OCI-LY7 (cell line): ENCODE measurements at regions of chr16 and their contacts with region 1.

Region 1: DNA sequence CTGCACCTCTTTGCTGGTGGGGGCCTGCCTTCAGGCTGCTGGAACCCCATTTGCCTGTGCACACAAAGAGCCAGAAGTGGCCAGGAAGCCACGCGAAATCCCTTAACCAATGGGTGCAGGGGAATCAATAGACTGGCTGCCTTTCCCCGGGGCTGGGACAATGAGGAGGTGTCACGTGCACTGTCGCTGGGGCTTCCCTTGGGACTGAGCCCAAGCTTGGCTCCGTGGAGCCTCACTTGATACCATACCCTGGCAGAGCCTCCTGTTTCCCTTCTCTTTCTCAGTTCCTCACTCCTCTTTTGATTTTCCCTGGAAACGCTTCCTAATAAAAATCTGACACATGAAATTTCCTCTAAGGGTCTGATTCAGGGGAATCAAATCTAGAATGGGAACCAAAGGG is 38.8 kb upstream of the C16orf82 start:
- DNase-seq: no peak
- H3K4me3 ChIP-seq: no peak overlapping the region
- H3K27ac ChIP-seq: no peak overlapping the region
- H3K4me1 ChIP-seq: no peaks in the 10 kb centered on the region
- CTCF ChIP-seq: no peak

Region 2: DNA sequence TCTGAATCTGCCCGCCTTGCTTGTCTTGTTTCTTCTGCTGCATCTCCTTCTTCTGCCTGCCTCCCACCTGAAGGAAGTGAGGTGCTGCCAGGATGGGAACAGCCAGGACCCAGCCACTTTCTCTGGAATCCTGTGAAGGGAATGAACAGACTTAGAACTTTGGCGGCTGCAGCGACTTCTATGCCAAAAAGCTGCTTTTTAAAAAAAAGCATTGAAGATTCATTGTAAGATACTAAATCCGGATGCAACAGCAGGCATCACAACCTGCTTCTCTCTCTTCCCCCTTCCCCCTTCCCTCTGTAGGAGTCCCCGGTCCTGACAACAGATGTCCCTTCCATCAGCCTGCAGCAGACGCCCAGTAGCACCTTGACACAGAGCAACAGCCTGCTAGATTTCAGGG is 1159.9 kb before region 1 on chr16:
- CTCF ChIA-PET with region 1: no interaction called
- POLR2A ChIA-PET with region 1: no interaction called
- intact Hi-C with region 1: loop called (anchors 5 kb)
- DNase-seq: no peak
- H3K4me3 ChIP-seq: no peak overlapping the region
- H3K27ac ChIP-seq: no peak overlapping the region
- H3K4me1 ChIP-seq: no peaks in the 10 kb centered on the region
- CTCF ChIP-seq: no peak

Region 3: GRCh38 chr16:26806657-26807056 is 221.3 kb before region 1 on chr16:
- CTCF ChIA-PET with region 1: no interaction called
- POLR2A ChIA-PET with region 1: no interaction called
- intact Hi-C with region 1: no loop called
- DNase-seq: no peak
- H3K4me3 ChIP-seq: no peak overlapping the region
- H3K27ac ChIP-seq: no peak overlapping the region
- H3K4me1 ChIP-seq: no peaks in the 10 kb centered on the region
- CTCF ChIP-seq: no peak